Mammary epithelial cell (primary cell): ENCODE measurements at regions of chr1 and their contacts with region 1.

Region 1: GRCh38 chr1:172745014-172745413 is 86.1 kb downstream of the FASLG start:
- DNase-seq: peak; percentile 78
- H3K4me3 ChIP-seq: no peak overlapping the region
- H3K27ac ChIP-seq: no peak overlapping the region
- H3K4me1 ChIP-seq: peaks cover 21% of the 10 kb centered on the region
- H3K27me3 ChIP-seq: no peaks in the 10 kb centered on the region
- CTCF ChIP-seq: peak; percentile 74 to 79

Region 2: DNA sequence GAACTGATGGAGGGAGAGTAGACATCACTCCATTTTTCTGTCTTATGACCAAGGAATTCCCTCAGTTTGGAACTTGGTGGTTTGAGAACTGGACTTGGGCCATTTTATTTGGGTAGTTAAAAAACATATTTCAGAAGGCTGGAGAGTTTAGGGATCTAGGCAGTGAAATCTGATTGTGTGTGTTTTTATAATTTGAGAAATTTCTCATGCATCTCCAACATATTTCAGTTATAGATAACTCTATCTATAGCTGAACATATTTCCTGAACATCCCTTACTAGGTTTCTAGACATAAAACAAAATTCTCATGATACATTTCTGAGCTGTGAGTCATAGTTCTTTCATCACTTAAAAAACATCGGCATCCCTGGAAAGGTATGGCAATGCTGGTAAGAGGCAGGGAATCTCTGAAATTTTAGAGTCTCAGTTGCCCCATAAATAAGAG is 16.6 kb after region 1 on chr1:
- CTCF ChIA-PET with region 1: no interaction called
- dilution Hi-C with region 1: no loop called
- in situ Hi-C with region 1: no loop called
- intact Hi-C with region 1: loop called (anchors 2 kb)
- DNase-seq: peak; percentile 70
- H3K4me3 ChIP-seq: no peak overlapping the region
- H3K27ac ChIP-seq: no peak overlapping the region
- H3K4me1 ChIP-seq: peaks cover 17% of the 10 kb centered on the region
- H3K27me3 ChIP-seq: no peaks in the 10 kb centered on the region
- CTCF ChIP-seq: no peak

Region 3: GRCh38 chr1:172789866-172790644 is 45.0 kb after region 1 on chr1:
- CTCF ChIA-PET with region 1: no interaction called
- dilution Hi-C with region 1: no loop called
- in situ Hi-C with region 1: no loop called
- intact Hi-C with region 1: no loop called
- DNase-seq: no peak
- H3K4me3 ChIP-seq: no peak overlapping the region
- H3K27ac ChIP-seq: no peak overlapping the region
- H3K4me1 ChIP-seq: no peaks in the 10 kb centered on the region
- H3K27me3 ChIP-seq: peaks cover 5% of the 10 kb centered on the region
- CTCF ChIP-seq: no peak

Region 4: GRCh38 chr1:172948457-172948856 is 203.4 kb after region 1 on chr1:
- CTCF ChIA-PET with region 1: no interaction called
- dilution Hi-C with region 1: no loop called
- in situ Hi-C with region 1: no loop called
- intact Hi-C with region 1: no loop called
- DNase-seq: peak; percentile 92
- H3K4me3 ChIP-seq: no peak overlapping the region
- H3K27ac ChIP-seq: no peak overlapping the region
- H3K4me1 ChIP-seq: peaks cover 29% of the 10 kb centered on the region
- H3K27me3 ChIP-seq: no peaks in the 10 kb centered on the region
- CTCF ChIP-seq: no peak

Region 5: DNA sequence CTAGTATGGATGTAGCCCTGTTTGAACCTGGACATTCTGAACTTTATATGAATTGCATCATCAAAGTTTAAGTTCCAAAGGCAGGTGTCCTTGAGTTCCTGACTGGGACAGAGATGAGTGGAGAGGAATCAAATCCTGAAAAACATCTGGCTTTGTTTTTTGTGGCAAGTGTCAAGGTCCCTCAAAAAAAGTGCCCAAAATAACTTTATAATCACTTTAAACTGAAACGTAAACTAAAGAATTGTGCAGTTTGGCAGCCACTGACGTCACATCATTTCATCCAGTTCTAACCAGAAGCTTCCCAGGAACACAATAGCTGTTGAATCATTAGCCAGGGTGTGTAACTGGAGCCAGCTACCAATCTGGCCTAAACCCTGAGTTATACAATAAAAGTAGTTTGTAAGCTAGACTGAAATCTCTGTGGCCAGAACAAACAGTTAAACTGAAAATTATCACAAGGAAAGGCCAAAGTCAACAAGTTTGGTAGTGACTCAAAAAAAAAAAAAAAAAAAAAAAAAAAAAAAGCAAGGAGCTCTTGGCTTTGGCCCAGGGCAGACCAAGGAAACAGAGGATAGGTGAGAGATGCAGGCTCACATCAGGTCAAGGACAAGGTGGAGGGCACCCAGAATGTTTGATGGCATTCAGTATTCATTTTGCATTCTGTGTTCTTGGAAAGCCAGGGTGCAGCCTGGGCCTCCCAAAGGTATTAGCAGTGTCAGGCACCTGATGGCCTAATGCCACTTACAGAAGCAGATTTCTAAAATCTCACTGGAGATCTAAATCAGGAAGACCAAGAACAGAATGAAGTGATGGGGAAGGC is 231.4 kb after region 1 on chr1:
- CTCF ChIA-PET with region 1: no interaction called
- dilution Hi-C with region 1: no loop called
- in situ Hi-C with region 1: no loop called
- intact Hi-C with region 1: loop called (anchors 10 kb)
- DNase-seq: peak; percentile 94
- H3K4me3 ChIP-seq: no peak overlapping the region
- H3K27ac ChIP-seq: peak overlapping the region; percentile 61
- H3K4me1 ChIP-seq: peaks cover 29% of the 10 kb centered on the region
- H3K27me3 ChIP-seq: no peaks in the 10 kb centered on the region
- CTCF ChIP-seq: no peak

Region 6: DNA sequence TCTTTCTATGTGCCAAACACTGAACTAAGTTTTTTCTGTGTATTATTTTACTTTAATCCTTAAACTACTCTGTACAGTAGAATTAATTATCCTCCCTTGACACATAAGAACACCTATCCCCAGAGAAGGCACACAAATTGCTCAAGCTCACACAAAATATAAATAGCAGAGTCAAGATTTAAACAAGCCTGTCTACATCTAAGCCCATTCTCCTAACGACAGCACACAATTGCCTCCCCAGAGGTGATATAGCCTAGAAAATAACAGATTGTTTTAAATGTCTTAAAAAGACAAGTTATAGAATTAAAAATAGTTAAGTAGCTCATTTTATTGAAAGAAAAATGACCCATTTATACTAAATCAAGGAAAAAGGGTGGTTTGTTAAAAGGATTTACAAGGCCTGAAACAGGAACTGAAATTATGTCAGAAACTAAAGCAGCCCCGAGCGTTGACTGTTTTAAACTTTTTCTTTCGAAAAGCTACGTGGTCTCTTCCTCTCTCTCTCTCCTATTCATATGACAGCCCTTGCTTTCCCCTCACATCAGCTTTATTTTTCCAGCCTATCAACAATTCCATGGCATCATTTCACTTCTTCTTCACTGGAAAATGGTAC is 275.2 kb after region 1 on chr1:
- CTCF ChIA-PET with region 1: no interaction called
- dilution Hi-C with region 1: no loop called
- in situ Hi-C with region 1: no loop called
- intact Hi-C with region 1: no loop called
- DNase-seq: no peak
- H3K4me3 ChIP-seq: no peak overlapping the region
- H3K27ac ChIP-seq: no peak overlapping the region
- H3K4me1 ChIP-seq: no peaks in the 10 kb centered on the region
- H3K27me3 ChIP-seq: no peaks in the 10 kb centered on the region
- CTCF ChIP-seq: no peak

Region 7: GRCh38 chr1:173082913-173083312 is 337.9 kb after region 1 on chr1:
- CTCF ChIA-PET with region 1: no interaction called
- dilution Hi-C with region 1: no loop called
- in situ Hi-C with region 1: no loop called
- intact Hi-C with region 1: no loop called
- DNase-seq: no peak
- H3K4me3 ChIP-seq: no peak overlapping the region
- H3K27ac ChIP-seq: no peak overlapping the region
- H3K4me1 ChIP-seq: no peaks in the 10 kb centered on the region
- H3K27me3 ChIP-seq: no peaks in the 10 kb centered on the region
- CTCF ChIP-seq: no peak

Region 8: GRCh38 chr1:173202430-173203145 is 457.6 kb after region 1 on chr1:
- CTCF ChIA-PET with region 1: interaction called, 4 read pairs
- dilution Hi-C with region 1: no loop called
- in situ Hi-C with region 1: loop called (anchors 10 kb)
- intact Hi-C with region 1: loop called (anchors 1 kb)
- DNase-seq: peak; percentile 66
- H3K4me3 ChIP-seq: no peak overlapping the region
- H3K27ac ChIP-seq: no peak overlapping the region
- H3K4me1 ChIP-seq: peaks cover 12% of the 10 kb centered on the region
- H3K27me3 ChIP-seq: no peaks in the 10 kb centered on the region
- CTCF ChIP-seq: peak; percentile 58 to 70

Region 9: DNA sequence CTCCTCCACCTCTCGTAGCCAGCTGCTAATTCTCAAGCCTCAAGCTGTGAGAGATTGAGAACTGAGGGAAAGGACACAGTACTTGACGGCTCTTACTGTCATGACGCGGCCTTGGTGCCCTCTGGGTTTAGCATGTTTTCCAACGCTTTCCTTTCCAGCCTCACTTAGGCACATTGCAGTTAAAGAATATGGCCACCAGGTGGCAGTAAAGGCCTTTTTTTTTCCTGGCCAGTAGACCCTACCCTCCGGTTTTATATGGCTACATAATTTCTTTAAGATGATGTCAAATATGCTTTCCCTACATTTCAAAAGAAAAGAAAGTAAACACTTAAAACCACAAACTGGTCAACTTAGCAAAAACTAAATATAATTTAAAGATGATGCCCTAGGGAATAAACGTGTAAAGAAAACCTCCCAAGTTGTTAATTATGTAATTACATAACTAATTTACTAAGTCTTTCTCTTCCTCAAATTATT is 675.4 kb after region 1 on chr1:
- CTCF ChIA-PET with region 1: no interaction called
- dilution Hi-C with region 1: loop called (anchors 25 kb)
- in situ Hi-C with region 1: no loop called
- intact Hi-C with region 1: loop called (anchors 2 kb)
- DNase-seq: peak; percentile 68
- H3K4me3 ChIP-seq: no peak overlapping the region
- H3K27ac ChIP-seq: no peak overlapping the region
- H3K4me1 ChIP-seq: peaks cover 19% of the 10 kb centered on the region
- H3K27me3 ChIP-seq: no peaks in the 10 kb centered on the region
- CTCF ChIP-seq: peak; percentile 77 to 85

Region 10: DNA sequence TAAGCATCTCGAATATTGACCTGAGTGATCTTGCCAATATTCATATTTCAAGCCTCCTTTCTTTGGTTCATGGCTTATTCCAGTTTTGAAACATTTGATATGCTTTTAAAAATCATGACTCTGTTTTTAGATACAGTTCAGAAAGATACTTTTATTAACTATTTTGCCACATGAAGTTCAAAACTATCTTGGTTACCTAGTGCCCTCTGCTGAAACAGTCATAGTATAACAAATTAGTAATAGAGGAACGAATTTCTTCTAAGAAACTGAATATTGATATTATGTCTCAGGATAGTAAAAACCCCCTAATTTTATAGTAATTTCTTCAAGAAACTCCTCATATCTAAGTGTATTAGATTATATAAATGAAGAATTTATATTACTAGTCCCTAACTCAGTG is 1329.7 kb after region 1 on chr1:
- CTCF ChIA-PET with region 1: no interaction called
- dilution Hi-C with region 1: no loop called
- in situ Hi-C with region 1: no loop called
- intact Hi-C with region 1: loop called (anchors 10 kb)
- DNase-seq: no peak
- H3K4me3 ChIP-seq: no peak overlapping the region
- H3K27ac ChIP-seq: no peak overlapping the region
- H3K4me1 ChIP-seq: no peaks in the 10 kb centered on the region
- H3K27me3 ChIP-seq: no peaks in the 10 kb centered on the region
- CTCF ChIP-seq: peak; percentile 28 to 42